Cardiac septum (tissue), 1 donor: ENCODE measurements at regions of chrX and their contacts with region 1.

Region 1: GRCh38 chrX:130120746-130121504 is 10.6 kb upstream of the ELF4 start:
- DNase-seq: peak; percentile 92

Region 2: GRCh38 chrX:130079824-130080406 is 41.0 kb before region 1 on chrX:
- intact Hi-C with region 1: loop called (anchors 1 kb)
- DNase-seq: no peak

Region 3: GRCh38 chrX:130170752-130171445 is 50.0 kb after region 1 on chrX:
- intact Hi-C with region 1: loop called (anchors 5 kb)
- DNase-seq: no peak